ENCODE measurements at regions of chr4 and their contacts with region 1.

Region 1: DNA sequence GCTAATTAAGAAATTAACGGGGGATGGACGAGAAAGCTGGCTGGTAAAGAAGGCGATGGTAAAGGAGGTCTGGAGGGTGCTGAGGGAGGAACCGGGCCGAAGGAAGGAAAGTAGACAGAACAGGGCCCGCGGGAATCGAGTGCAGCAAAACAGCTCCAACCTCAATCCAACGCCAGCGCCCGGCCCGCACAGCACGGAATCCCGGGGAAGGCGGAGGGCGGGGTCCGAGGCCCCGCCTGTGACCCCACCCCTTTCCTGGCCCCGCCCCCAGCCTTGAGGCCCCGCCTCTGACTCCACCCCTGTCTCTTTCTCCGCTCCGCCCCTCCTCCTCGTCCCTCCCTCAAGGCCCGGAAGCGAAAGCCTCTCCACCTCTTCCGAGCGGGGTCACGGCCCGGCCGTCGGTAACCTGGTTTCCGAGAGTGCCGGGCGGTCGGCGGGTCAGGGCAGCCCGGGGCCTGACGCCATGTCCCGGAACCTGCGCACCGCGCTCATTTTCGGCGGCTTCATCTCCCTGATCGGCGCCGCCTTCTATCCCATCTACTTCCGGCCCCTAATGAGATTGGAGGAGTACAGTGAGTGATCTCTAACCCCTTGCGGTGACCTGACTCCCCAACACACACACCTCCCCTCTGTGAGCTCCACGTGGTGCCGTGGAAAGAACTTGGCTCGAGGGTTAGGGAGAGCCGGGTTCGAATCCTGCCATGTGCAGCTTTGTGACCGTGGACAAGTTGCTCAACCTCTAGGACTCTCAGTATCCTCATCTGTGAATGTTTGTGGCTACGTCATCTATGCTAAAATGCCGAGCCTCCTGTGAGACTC is at the start of gene SMIM20:
- DNase-seq: peak; percentile 96
- H3K4me3 ChIP-seq: peak within 1 kb of the TSS; percentile 51
- H3K27ac ChIP-seq: peak within 1 kb of the TSS; percentile 92
- H3K4me1 ChIP-seq: no peaks in the 10 kb centered on the region
- H3K27me3 ChIP-seq: no peaks in the 10 kb centered on the region
- CTCF ChIP-seq: no peak
- total RNA-seq, gene SMIM20: 36.5 to 37.4 TPM

Region 2: DNA sequence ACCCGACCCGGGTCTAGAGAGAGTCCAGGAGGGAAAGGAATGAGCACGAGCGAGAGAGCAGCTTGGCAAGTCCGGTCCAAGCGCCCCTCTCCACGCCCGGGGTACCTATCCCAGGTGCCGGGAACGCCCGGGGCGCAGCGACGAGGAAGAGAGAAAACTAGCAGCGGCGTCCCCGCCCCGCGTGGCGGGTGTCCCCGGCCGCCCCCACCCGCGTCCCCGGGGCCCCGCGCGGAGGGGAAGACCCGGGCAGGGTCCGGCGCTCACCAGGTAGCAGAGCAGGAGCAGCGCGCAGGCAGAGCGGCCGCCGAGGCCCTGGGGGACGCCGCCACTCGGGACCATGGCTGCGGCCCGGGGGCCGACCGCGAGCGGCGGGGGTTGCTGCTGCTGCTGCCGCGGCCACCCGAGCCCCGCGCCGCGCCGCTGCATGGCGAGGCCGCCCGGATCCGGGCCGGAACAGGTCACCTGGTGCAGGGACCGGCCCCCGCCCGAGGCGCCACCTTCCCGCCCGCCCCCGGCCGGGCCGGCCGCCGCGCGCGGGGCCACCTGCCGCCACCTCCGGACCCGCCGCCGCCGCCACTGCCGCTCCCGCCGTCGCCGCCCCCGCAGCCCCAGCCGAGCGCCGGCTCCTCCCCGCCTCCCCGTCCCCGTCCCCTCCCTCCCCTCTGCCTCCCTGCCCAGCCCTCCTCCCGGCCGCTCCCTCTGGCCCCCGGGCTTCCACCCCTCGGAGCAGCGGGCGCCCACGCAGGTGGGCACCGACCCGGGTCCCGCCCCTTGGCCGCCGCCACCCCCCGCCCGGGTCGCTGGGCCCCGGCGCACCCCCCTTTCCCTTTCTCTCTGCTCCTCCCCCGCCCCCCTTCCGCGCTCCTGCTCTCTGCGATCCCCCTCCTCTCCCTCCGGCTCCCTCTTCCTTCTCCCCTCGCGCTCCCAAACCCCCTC is 51.4 kb before region 1 on chr4 and contains the start of gene SEL1L3:
- intact Hi-C with region 1: loop called (anchors 10 kb)
- DNase-seq: peak; percentile 61
- H3K4me3 ChIP-seq: peak within 1 kb of the TSS; percentile 88
- H3K27ac ChIP-seq: peak within 1 kb of the TSS; percentile 91
- H3K4me1 ChIP-seq: peaks cover 10% of the 10 kb centered on the region
- H3K27me3 ChIP-seq: no peaks in the 10 kb centered on the region
- CTCF ChIP-seq: no peak
- total RNA-seq, gene SEL1L3: 88.4 to 96.2 TPM